Activated CD4-positive, alpha-beta memory T cell treated with anti-CD3 and anti-CD28 coated beads for 36 hours (primary cell): ENCODE measurements at regions of chr1 and their contacts with region 1.

Region 1: DNA sequence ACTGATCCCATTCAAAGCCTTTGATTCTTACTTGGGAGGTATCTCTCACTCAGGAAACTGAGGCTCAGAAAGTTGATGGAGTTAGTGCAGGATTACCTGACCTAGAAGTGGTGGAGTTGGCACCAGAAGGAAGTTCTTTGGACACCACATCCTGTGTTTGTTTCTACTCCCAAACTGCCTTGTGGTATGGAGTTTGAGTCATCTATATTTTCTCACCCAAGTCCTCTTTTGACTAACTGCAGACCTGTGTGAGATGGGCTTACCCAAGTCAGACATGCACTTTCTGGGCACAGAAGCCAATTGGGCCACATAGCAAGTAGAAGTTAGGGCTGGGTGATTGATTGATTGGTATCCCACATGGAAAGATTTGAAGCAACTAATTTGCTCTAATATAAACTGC is 36.1 kb downstream of the FGGY start:
- DNase-seq: peak; percentile 46
- H3K4me3 Mint-ChIP-seq: no peak overlapping the region
- H3K27ac Mint-ChIP-seq: peak overlapping the region; percentile 54
- H3K4me1 Mint-ChIP-seq: peaks cover 28% of the 10 kb centered on the region
- H3K27me3 Mint-ChIP-seq: no peaks in the 10 kb centered on the region

Region 2: GRCh38 chr1:59354709-59355337 is 21.8 kb after region 1 on chr1:
- CTCF ChIA-PET with region 1: no interaction called
- POLR2A ChIA-PET with region 1: no interaction called
- intact Hi-C with region 1: loop called (anchors 1 kb)
- DNase-seq: peak; percentile 38
- H3K4me3 Mint-ChIP-seq: no peak overlapping the region
- H3K27ac Mint-ChIP-seq: peak overlapping the region; percentile 59
- H3K4me1 Mint-ChIP-seq: peaks cover 8% of the 10 kb centered on the region
- H3K27me3 Mint-ChIP-seq: no peaks in the 10 kb centered on the region

Region 3: GRCh38 chr1:59477286-59477685 is 144.3 kb after region 1 on chr1:
- CTCF ChIA-PET with region 1: no interaction called
- POLR2A ChIA-PET with region 1: no interaction called
- intact Hi-C with region 1: loop called (anchors 5 kb)
- DNase-seq: peak; percentile 80
- H3K4me3 Mint-ChIP-seq: no peak overlapping the region
- H3K27ac Mint-ChIP-seq: peak overlapping the region; percentile 43
- H3K4me1 Mint-ChIP-seq: peaks cover 15% of the 10 kb centered on the region
- H3K27me3 Mint-ChIP-seq: no peaks in the 10 kb centered on the region